B cell (primary cell): ENCODE measurements at regions of chr7 and their contacts with region 1.

Region 1: DNA sequence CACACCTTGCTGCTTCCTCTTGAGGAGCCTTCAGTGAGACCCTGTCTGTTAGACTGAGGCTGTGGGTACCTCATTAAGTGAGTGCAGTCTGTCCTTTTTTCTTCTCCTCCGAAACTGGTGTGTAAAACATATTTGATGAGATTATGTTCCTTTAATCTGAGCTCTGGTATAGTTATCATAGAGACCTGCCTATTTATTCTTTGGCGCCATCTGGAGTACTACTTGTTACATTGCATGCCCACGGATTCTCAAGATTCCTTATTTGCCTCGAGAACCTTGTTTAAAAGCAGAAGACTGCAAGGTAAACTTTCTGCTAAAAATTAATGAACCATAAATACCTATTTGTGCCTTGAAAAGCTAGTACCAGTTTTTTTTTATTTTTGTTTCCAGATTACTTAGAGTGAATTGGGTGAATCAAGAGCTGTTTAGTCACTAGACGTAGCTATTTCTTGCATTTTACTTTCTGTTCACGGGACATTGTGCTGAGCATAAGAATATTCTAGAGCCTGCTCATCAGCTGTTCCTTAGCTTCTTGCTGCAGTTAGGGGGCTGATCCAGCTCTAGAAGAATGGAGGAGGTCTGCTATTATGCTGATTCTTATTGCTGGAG is 16.9 kb upstream of the STMP1 start:
- DNase-seq: peak; percentile 56
- ATAC-seq: peak; percentile 70
- H3K4me3 ChIP-seq: no peak overlapping the region
- H3K4me3 Mint-ChIP-seq: no peak overlapping the region
- H3K27ac ChIP-seq: no peak overlapping the region
- H3K27ac Mint-ChIP-seq: no peak overlapping the region
- H3K4me1 ChIP-seq: no peaks in the 10 kb centered on the region
- H3K4me1 Mint-ChIP-seq: no peaks in the 10 kb centered on the region
- H3K27me3 ChIP-seq: no peaks in the 10 kb centered on the region
- H3K27me3 Mint-ChIP-seq: no peaks in the 10 kb centered on the region
- CTCF ChIP-seq: peak; percentile 82

Region 2: DNA sequence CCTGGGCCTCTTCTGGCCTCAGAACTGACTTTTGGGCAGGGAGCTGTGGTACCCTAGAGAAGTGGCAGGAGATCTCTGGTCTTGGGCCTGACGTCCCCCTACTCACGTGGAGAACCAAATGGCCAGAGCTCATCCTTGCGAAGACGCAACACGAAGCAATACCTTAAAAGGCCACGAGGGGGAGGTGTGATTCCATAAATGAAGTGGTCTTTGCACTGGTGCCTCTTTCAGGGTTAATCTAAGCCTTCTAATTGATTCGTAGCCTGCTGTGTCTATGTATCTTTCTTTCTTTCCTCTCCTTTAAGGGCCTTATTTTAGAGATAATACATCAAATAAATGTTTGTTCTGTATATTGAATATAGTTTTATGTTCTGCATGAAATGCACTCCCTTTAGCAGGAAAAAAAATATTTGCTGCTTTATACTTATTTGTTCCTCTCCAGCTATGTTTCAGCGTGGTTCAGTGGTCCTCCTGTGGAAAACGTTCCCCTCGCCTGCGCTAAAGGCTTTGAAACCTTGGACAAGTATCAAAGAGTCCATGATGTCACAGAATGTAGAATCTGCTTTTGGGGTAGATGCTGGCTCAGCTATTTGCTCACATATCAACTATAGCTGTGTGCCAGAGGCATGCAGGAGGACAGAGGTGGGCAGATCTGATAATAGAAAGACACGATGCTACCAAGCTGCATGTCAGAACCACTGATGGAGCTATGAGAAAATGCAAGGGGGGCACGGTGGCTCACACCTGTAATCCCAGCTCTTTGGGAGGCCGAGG is 370.7 kb before region 1 on chr7:
- CTCF ChIA-PET with region 1: interaction called, 109 read pairs
- POLR2A ChIA-PET with region 1: no interaction called
- intact Hi-C with region 1: no loop called
- DNase-seq: peak; percentile 74
- ATAC-seq: peak; percentile 74
- H3K4me3 ChIP-seq: no peak overlapping the region
- H3K4me3 Mint-ChIP-seq: no peak overlapping the region
- H3K27ac ChIP-seq: no peak overlapping the region
- H3K27ac Mint-ChIP-seq: no peak overlapping the region
- H3K4me1 ChIP-seq: no peaks in the 10 kb centered on the region
- H3K4me1 Mint-ChIP-seq: no peaks in the 10 kb centered on the region
- H3K27me3 ChIP-seq: no peaks in the 10 kb centered on the region
- H3K27me3 Mint-ChIP-seq: peaks cover 16% of the 10 kb centered on the region
- CTCF ChIP-seq: peak; percentile 94

Region 3: DNA sequence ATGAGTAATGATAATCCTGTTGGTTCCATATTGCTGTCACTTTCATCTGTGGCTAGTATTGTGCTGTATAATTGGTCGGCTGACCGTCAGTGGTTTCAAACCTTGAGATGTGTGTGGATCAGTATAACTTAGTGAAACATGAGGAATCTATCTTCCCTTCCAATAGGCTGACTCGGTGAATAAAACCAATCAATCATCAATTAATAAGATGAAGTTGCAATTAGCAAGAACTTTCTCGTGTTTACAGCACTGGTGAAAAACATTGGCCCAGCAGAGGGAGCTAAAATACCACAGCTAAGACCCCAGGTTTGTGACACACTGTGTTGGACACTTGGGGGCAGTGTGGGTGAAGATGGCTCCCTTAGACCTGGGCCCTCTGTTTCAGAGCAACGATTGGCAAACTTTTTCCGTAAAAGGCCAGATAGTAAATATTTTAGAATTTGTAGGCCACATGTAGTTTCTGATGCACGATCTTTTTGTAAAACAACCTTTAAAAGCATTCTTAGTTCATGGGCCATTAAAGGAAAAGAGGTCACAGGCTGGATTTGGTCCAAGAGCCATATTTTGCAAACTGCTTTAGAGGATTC is 363.9 kb before region 1 on chr7:
- CTCF ChIA-PET with region 1: interaction called, 109 read pairs
- POLR2A ChIA-PET with region 1: no interaction called
- intact Hi-C with region 1: no loop called
- DNase-seq: peak; percentile 85
- ATAC-seq: peak; percentile 100
- H3K4me3 ChIP-seq: no peak overlapping the region
- H3K4me3 Mint-ChIP-seq: no peak overlapping the region
- H3K27ac ChIP-seq: no peak overlapping the region
- H3K27ac Mint-ChIP-seq: no peak overlapping the region
- H3K4me1 ChIP-seq: peaks cover 4% of the 10 kb centered on the region in 2 donors
- H3K4me1 Mint-ChIP-seq: peaks cover 8% of the 10 kb centered on the region
- H3K27me3 ChIP-seq: peaks cover 0 to 4% (median 0%) of the 10 kb centered on the region in 4 experiments
- H3K27me3 Mint-ChIP-seq: peaks cover 13% of the 10 kb centered on the region
- CTCF ChIP-seq: peak; percentile 98

Region 4: GRCh38 chr7:135509903-135510602 is 135.3 kb before region 1 on chr7 and contains the start of gene CNOT4:
- CTCF ChIA-PET with region 1: interaction called, 5 read pairs
- POLR2A ChIA-PET with region 1: no interaction called
- intact Hi-C with region 1: loop called (anchors 1 kb)
- DNase-seq: peak; percentile 97
- ATAC-seq: peak; percentile 95
- H3K4me3 ChIP-seq: peak within 1 kb of the TSS; percentile 79 to 96 (median 89)
- H3K4me3 Mint-ChIP-seq: no peak within 1 kb of the TSS
- H3K27ac ChIP-seq: peak within 1 kb of the TSS; percentile 92 to 96
- H3K27ac Mint-ChIP-seq: no peak within 1 kb of the TSS
- H3K4me1 ChIP-seq: peaks cover 17 to 24% of the 10 kb centered on the region in 2 donors
- H3K4me1 Mint-ChIP-seq: peaks cover 10% of the 10 kb centered on the region
- H3K27me3 ChIP-seq: no peaks in the 10 kb centered on the region
- H3K27me3 Mint-ChIP-seq: no peaks in the 10 kb centered on the region
- CTCF ChIP-seq: no peak
- total RNA-seq, gene CNOT4: 52.1 and 55.1 TPM in 2 replicates

Region 5: GRCh38 chr7:135620980-135621850 is 24.2 kb before region 1 on chr7:
- CTCF ChIA-PET with region 1: interaction called, 19 read pairs
- POLR2A ChIA-PET with region 1: no interaction called
- intact Hi-C with region 1: no loop called
- DNase-seq: peak; percentile 54
- ATAC-seq: no peak
- H3K4me3 ChIP-seq: no peak overlapping the region
- H3K4me3 Mint-ChIP-seq: no peak overlapping the region
- H3K27ac ChIP-seq: no peak overlapping the region
- H3K27ac Mint-ChIP-seq: no peak overlapping the region
- H3K4me1 ChIP-seq: no peaks in the 10 kb centered on the region
- H3K4me1 Mint-ChIP-seq: no peaks in the 10 kb centered on the region
- H3K27me3 ChIP-seq: no peaks in the 10 kb centered on the region
- H3K27me3 Mint-ChIP-seq: no peaks in the 10 kb centered on the region
- CTCF ChIP-seq: peak; percentile 99

Region 6: GRCh38 chr7:135634191-135634878 is 11.1 kb before region 1 on chr7:
- CTCF ChIA-PET with region 1: interaction called, 26 read pairs
- POLR2A ChIA-PET with region 1: no interaction called
- intact Hi-C with region 1: no loop called
- DNase-seq: no peak
- ATAC-seq: no peak
- H3K4me3 ChIP-seq: no peak overlapping the region
- H3K4me3 Mint-ChIP-seq: no peak overlapping the region
- H3K27ac ChIP-seq: no peak overlapping the region
- H3K27ac Mint-ChIP-seq: no peak overlapping the region
- H3K4me1 ChIP-seq: no peaks in the 10 kb centered on the region
- H3K4me1 Mint-ChIP-seq: no peaks in the 10 kb centered on the region
- H3K27me3 ChIP-seq: no peaks in the 10 kb centered on the region
- H3K27me3 Mint-ChIP-seq: no peaks in the 10 kb centered on the region
- CTCF ChIP-seq: no peak